ENCODE measurements at regions of chr11 and their contacts with region 1.

Region 1: GRCh38 chr11:63768237-63769043 is at the start of gene ZFTA:
- DNase-seq: peak; percentile 29 to 92 (median 63)

Region 2: GRCh38 chr11:63783925-63784592 is 15.6 kb after region 1 on chr11:
- intact Hi-C with region 1: no loop called
- DNase-seq: no peak

Region 3: DNA sequence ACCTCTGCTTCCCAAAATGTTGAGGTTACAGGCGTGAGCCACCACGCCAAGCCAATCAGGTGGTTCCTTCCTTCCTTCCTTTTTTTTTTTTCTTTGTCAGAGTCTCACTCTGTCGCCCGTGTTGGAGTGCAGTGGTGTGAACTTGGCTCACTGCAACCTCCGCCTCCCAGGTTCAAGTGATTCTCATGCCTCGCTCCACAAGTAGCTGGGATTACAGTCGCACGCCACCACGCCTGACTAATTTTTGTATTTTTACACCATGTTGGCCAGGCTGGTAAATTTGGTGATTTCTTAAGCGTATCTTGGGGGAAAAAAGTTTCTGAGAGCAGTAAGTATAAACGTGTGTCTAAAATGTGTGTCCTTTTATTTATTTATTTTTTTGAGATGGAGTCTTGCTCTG is 26.6 kb after region 1 on chr11:
- intact Hi-C with region 1: no loop called
- DNase-seq: no peak

Region 4: GRCh38 chr11:63813035-63813562 is 44.7 kb after region 1 on chr11 and contains the start of gene SPINDOC:
- intact Hi-C with region 1: loop called (anchors 2 kb)
- DNase-seq: peak; percentile 69 to 98 (median 82)

Region 5: GRCh38 chr11:63945477-63946163 is 177.2 kb after region 1 on chr11:
- intact Hi-C with region 1: loop called (anchors 1 kb)
- DNase-seq: peak; percentile 47 to 95 (median 72)